ENCODE measurements at regions of chr4 and their contacts with region 1.

Region 1: DNA sequence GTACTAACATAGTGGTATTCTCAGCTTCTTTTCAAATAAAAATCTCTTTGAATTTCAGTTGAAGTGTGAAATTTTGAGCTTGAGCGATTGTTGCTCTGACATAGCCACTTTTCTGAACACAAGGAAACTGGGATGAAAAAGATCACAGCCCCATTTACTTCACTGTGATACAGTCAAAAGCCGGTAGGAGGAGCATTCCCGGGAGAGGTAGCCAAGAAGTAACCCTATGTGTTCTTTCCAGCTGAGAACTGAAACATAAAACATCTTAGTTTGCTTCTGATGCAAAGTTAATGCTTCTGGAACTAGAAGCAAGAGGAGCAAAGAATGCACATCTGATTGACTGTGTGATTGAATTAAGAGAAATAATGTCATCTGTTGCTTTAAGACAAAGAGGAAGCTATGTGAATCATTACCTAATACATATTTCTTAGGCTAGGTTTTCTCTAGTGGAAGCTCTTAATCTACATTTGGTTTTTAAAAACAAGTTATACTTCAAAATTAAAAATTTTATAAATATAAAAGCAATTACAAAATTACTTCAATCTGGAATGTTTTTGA is 88.3 kb upstream of the UNC5C start:
- DNase-seq: no peak
- ATAC-seq: peak in 1 of 8 donors; percentile 46
- H3K4me3 ChIP-seq: no peak overlapping the region
- H3K27ac ChIP-seq: no peak overlapping the region
- H3K4me1 ChIP-seq: no peaks in the 10 kb centered on the region
- H3K27me3 ChIP-seq: no peaks in the 10 kb centered on the region
- CTCF ChIP-seq: peak in 6 of 9 donors; percentile 25 to 49 (median 32)

Region 2: DNA sequence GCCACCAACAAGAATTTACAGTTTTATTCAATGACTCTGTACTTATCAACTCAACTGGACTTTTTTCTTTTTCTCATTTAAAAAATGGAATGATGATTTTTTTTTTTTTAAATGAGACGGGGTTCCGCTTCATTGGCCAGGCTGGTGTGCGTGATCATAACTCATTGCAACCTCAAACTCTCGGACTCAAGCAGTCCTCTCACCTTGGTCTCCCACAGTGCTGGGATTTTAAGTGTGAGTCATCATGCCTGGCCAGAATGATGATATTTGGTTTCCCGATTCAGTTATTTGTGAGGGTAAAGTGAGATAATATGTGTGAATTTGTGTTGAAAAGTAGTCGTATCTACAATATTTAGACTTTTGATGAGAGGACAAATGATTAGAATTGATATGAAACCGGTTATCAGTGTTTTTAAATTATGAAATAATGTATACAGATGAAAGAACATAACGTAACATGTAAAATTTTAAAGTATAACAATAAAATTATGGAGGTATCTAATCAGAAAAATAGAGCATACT is 22.4 kb before region 1 on chr4:
- intact Hi-C with region 1: loop called in 1 of 10 experiments (anchors 2 kb)
- DNase-seq: no peak
- ATAC-seq: no peak
- H3K4me3 ChIP-seq: no peak overlapping the region
- H3K27ac ChIP-seq: no peak overlapping the region
- H3K4me1 ChIP-seq: no peaks in the 10 kb centered on the region
- H3K27me3 ChIP-seq: no peaks in the 10 kb centered on the region
- CTCF ChIP-seq: no peak

Region 3: DNA sequence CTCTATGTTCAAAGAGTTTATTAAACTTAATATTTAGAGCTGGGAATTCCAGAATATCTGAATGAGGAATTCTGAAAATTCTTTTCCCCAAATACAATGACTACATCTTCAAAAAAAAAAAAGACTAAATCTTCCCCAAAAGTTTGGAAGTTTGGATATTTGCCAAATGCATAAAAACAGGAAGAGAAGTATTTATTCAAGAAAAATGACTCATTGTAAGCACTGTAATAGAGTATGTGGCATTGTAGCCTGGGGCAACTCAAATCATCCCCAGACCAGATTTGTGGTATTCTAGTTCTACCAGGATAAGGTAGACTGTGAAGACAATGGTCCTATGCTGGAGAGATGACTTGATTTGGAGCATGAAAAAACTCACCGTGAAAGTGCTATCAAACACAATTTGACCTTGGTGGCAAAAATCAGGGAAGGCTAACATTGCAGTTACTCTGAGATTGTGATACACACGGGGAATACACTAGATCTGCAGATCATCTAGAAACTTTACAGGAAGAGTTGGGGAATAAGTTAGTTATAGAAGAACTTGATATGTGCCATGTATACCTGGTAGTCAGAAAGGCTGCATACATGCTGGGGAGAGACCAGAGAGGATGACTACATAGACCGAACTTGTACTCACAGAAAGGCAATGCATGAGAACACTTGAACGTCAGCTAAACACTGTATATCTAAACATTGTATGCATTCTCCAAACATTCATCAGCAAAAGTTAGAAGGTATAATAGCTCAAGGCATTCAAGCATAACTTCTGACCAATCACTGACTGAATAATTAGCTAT is 124.5 kb after region 1 on chr4:
- intact Hi-C with region 1: no loop called
- DNase-seq: no peak
- ATAC-seq: no peak
- H3K4me3 ChIP-seq: no peak overlapping the region
- H3K27ac ChIP-seq: no peak overlapping the region
- H3K4me1 ChIP-seq: no peaks in the 10 kb centered on the region
- H3K27me3 ChIP-seq: no peaks in the 10 kb centered on the region
- CTCF ChIP-seq: no peak